ENCODE measurements at regions of chr6 and their contacts with region 1.

Region 1: DNA sequence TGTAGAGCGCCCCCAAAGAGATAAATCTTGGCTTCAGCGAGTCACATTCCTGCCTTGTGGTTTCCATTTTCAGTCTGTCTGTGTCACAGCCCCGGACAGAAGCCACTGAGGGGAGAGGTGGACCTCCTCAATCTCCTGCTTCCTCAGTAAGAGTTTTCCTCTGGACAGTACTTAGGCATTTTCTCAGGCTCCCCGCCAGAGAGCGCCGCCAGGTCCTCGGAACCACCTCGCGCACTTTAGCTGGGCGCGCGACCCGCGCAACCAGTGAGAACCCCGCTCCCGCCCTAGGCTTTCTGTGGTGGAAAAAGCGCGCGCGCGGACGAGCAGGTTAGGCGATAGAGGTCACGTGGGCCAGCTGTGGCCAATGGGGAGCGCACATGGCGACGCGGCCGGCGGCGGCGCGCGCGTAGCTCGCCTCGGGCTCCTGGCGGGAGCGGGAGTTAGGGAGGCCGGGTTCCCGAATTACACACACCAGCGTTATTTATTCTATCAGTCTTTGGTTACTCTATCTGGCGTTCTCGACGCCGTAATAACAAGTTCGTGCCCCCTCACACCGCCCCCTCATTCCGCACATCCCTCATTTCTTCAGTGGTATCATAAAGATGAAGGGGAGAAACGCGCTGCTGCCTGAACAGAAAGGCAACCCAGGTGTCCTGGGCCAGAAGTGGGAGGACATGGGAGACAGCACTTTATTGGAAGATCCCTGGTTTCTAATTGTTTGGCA is 19.4 kb downstream of the PXT1 start:
- DNase-seq: peak; percentile 94 to 100 (median 98)

Region 2: DNA sequence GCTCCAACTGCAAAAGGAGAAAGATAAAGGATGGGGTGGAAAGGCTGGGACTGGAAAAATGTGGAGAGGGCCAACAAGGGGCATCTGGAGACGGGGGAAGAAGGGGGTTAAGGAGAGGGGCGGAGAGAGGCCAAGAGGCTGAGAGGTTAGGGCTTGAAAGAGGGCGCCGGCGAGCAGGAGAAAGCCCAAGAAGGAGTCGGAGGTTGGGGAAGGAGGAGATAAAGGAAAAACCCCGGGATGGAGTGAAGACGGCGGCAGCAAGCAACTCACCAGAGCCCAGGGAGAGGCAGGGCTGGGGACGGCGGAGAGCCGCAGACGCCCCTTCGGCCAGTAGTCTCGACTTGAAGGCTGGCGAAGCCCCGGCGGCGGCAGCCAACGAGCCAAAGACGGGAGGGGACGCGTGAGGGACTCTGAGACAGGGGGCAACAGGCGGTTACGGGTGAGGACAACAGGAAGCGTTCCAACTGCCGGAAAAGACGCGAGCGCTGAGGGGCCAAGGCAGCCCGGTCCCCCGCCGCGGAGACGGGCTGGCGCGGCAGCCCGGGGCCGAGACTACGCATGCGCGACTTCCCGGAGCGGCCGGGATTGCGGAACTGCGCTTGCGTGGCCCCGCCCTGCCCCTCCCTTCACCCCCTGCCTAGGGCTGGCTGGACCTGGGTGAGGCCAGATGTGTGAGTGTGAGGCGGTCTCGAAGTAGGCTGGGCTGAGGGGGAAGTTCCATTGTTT is 123.8 kb after region 1 on chr6 and contains the start of gene STK38:
- intact Hi-C with region 1: loop called (anchors 5 kb)
- DNase-seq: peak; percentile 68 to 96 (median 90)

Region 3: DNA sequence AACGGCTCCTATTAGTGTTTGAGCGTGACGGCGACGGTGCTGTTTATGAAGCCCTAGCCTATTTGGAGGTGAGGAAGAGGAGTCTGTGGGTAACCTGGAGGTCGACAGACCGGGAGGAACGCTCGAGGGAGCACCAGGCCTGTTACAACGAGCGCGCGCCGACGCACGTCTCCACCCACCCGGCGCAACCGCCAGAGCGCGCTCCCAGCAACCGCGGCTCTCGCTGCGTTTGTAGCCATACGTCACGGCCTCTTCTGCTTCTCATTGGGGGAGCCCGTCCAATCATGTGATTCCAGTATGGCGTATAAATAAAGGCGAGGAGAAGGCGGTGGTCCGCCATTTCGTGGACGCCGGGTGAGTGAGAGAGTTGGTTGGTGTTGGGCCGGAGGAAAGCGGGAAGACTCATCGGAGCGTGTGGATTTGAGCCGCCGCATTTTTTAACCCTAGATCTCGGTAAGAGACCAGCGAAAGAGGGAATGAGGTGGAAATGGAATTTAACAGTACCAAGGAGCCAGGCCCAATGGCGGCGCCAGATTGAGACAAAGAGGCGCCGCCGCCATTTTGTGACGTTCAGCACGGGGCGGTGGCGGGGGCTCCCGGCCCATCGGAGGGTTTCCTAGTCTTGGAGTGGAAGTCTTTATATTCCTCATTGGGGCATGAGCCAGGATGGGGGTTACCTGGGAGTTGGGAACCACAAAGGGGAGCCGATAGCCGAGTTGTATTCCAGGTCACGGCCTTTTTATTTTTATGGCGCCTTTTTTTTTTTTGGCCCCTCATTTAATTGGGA is 171.0 kb after region 1 on chr6 and contains the start of gene SRSF3:
- intact Hi-C with region 1: loop called (anchors 2 kb)
- DNase-seq: peak; percentile 92 to 99 (median 98)